Head of caudate nucleus (tissue), 42 donors: ENCODE measurements at regions of chr10 and their contacts with region 1.

Region 1: GRCh38 chr10:104642658-104643302 is 1.7 kb downstream of the SORCS3 start:
- DNase-seq: peak; percentile 72 to 96 (median 88)

Region 2: GRCh38 chr10:104777086-104777799 is 134.5 kb after region 1 on chr10:
- intact Hi-C with region 1: loop called (anchors 10 kb)
- DNase-seq: peak in 22 of 42 donors; percentile 12 to 58 (median 30)

Region 3: DNA sequence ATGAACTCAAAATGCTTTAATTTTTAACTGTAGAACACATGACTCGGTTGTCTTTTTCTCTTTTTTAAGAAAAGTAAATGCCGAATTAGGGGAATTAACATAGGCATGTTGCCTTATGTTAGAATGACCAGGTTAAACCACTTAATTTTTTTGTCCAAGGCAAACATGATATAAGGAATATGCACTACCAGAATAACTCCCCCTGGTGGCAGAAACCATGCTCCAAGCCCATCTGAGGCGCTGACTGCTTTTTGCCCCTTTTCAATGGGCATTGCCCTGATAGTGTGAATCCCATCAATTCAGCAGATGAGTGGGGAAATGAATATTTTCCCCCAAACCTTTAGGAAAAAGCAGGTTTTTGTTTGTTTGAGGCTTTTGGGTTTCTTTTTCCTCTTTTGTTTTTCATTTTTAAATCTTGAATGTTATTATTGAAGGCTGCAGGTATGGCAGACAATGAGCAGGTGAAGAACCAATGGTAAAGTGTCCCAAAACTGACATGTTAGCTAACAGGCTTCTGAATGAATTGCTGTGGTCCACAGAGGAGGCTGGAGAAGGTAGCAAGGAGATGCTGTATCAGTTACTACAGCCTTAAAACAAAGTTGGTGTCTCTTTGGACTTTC is 282.6 kb after region 1 on chr10:
- intact Hi-C with region 1: loop called (anchors 10 kb)
- DNase-seq: peak in 40 of 42 donors; percentile 17 to 83 (median 50)